Activated naive CD4-positive, alpha-beta T cell treated with anti-CD3 and anti-CD28 coated beads for 36 hours (primary cell): ENCODE measurements at regions of chr14 and their contacts with region 1.

Region 1: GRCh38 chr14:76924371-76925096 is 98.3 kb downstream of the LRRC74A start:
- DNase-seq: peak; percentile 34
- H3K4me3 Mint-ChIP-seq: no peak overlapping the region
- H3K27ac Mint-ChIP-seq: no peak overlapping the region
- H3K4me1 Mint-ChIP-seq: peaks cover 76% of the 10 kb centered on the region
- H3K27me3 Mint-ChIP-seq: no peaks in the 10 kb centered on the region

Region 2: DNA sequence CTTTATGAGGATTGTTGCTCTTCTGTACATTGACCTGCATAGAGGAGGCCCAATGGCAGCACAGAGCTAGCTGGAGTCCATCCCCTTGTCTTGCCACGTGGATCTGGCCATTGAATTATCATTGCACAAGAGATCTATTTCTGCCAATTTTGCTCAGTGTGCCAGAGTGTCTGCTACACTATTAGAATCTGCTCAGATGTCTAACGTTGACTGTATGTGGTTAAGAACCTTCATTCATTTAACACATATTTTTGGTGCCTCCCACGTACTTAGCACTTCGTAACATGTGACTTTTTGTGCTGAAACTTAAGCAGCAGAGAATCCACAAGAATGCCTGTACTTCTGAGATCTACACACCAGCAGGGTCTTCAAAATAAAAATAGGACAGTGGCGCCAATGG is 329.3 kb before region 1 on chr14:
- CTCF ChIA-PET with region 1: no interaction called
- intact Hi-C with region 1: no loop called
- DNase-seq: no peak
- H3K4me3 Mint-ChIP-seq: no peak overlapping the region
- H3K27ac Mint-ChIP-seq: no peak overlapping the region
- H3K4me1 Mint-ChIP-seq: no peaks in the 10 kb centered on the region
- H3K27me3 Mint-ChIP-seq: peaks cover 6% of the 10 kb centered on the region

Region 3: GRCh38 chr14:76911473-76911872 is 13.1 kb before region 1 on chr14:
- CTCF ChIA-PET with region 1: interaction called, 36 read pairs
- intact Hi-C with region 1: no loop called
- DNase-seq: no peak
- H3K4me3 Mint-ChIP-seq: no peak overlapping the region
- H3K27ac Mint-ChIP-seq: no peak overlapping the region
- H3K4me1 Mint-ChIP-seq: peaks cover 15% of the 10 kb centered on the region
- H3K27me3 Mint-ChIP-seq: no peaks in the 10 kb centered on the region